ENCODE measurements at regions of chr12 and their contacts with region 1.

Region 1: DNA sequence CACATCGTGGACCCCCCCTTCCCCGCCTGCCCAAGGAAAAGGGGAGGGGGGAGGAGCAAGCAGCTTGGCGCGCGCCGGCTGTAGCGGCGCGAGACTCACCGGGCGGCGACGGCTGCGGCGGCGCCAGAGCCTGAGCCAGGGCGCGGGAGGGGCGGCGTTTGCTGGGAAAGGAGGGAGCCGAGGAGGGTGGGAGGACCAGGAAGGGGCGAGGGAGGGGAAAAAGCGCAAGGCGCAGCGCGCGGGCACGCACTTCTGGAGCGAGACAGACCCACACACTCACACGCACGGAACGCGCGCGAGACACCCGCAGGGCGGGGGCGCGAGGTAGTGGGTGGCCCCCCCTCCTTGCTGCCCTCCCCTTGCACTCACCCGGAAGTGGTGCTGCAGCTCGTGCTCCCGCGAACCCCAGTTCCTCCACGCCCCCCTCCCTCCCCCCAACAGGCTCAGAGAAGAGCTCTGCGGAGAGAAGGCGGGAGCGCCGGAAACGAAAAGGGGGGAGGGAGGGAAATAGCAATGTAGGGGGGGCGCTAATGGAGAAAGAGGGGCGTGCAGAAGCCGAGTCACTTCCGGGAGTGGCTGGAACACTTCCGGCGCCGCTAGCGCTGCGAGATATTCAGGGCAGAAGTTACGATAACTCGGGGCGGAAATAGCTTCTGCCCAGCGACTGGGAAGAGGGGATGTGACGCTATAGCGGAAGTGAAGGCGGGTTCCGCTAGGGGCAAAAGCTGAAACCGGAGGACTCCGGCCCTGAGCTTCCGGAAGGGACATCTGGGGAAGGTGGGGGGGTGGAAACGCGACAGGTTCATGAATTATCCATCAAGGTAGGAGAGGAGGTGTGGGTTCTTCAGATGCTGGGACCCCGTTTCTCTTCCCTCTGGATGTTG is at the start of gene ZNF384:
- DNase-seq: peak; percentile 99
- H3K4me3 ChIP-seq: peak within 1 kb of the TSS; percentile 68 to 100
- H3K27ac ChIP-seq: peak within 1 kb of the TSS; percentile 88
- H3K4me1 ChIP-seq: peaks cover 38% of the 10 kb centered on the region
- H3K27me3 ChIP-seq: no peaks in the 10 kb centered on the region
- CTCF ChIP-seq: peak in 1 of 3 experiments; percentile 38
- POLR2A ChIP-seq: peak in 1 of 2 donors; percentile 28
- total RNA-seq, gene ZNF384: 31.9 TPM

Region 2: GRCh38 chr12:4819654-4820053 is 1869.6 kb before region 1 on chr12:
- intact Hi-C with region 1: no loop called
- DNase-seq: no peak
- H3K4me3 ChIP-seq: no peak overlapping the region
- H3K27ac ChIP-seq: no peak overlapping the region
- H3K4me1 ChIP-seq: no peaks in the 10 kb centered on the region
- H3K27me3 ChIP-seq: no peaks in the 10 kb centered on the region
- CTCF ChIP-seq: no peak
- POLR2A ChIP-seq: no peak

Region 3: DNA sequence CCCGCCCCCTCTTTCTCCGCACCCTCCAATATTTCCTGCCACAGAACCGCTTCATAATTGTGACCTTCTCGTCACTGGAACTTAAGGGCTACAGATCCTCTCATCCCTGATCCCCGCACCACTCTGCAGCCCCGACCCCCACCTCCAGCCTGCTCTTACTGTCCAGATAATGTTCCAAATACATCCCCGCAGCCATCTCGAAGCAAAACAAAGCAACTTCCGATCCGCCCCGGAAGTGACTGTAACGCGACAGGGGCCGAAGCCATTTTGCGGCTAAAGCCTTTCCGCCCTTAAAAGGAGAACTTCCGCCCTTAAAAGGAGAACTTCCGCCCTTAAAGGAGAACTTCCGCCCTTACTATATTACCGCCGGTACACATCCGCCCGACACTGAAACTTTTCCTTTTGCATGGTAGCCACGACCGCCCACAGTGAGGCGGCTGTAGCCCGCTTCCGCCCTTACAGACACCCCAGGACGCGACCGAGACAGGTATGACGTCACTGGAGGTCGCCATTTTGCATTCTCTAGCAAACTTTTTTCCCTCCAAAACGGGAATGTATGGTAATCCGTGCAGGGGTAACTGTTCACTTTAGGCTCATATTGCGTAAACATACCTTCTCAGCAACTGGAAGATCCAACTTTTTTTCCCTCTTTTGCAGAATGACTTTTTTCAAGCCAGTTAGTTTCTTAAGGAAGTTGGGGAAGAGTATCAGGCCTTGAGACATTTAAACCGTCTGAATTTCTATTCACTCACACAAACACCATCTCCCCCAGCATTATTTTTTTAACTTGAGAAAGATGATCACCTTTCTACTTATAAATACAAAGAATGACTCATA is 26.1 kb before region 1 on chr12 and contains the start of gene ING4:
- intact Hi-C with region 1: loop called (anchors 1 kb)
- DNase-seq: peak in 1 of 2 donors; percentile 99
- H3K4me3 ChIP-seq: peak within 1 kb of the TSS; percentile 69 to 70
- H3K27ac ChIP-seq: peak within 1 kb of the TSS; percentile 68
- H3K4me1 ChIP-seq: peaks cover 15% of the 10 kb centered on the region
- H3K27me3 ChIP-seq: no peaks in the 10 kb centered on the region
- CTCF ChIP-seq: no peak
- POLR2A ChIP-seq: no peak
- total RNA-seq, gene ING4: 45.7 TPM

Region 4: DNA sequence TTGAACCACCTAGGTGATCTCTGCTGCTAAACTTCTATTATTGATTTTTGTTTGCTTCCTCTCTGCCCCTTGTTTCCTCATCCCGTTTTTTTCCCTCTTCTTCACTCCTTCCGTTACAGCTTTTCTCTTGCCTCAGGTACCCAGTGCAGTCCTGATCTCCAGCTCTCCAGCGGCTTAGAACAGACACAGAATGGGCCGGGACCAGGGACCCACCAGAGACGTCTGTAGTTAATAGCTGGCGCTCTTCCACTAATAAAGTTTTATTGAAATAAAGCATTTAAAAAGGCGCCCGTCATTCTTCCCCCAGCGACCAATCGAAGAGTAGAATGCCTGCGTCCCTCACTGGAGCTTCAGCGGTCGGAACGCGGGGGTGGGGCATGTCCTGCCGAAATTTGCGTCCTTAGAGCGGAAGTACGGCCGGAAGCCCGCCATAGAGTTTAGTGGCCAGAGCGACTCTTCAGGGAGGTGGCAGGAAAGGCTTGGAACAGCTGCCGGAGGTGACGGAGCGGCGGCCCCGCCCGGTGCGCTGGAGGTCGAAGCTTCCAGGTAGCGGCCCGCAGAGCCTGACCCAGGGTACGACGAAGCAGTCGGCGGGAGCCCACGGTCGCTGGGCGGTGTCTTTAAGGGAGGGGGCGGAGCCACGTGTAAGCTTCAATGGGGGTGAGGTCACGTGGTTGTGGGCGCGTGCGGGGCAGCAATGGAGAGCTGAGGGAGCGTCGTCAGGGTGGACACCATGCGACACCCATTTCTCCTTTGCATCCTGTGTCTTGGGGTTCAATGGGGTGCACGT is 34.6 kb after region 1 on chr12 and contains the start of gene COPS7A:
- intact Hi-C with region 1: loop called (anchors 2 kb)
- DNase-seq: peak in 1 of 2 donors; percentile 98
- H3K4me3 ChIP-seq: peak within 1 kb of the TSS; percentile 61 to 65
- H3K27ac ChIP-seq: peak within 1 kb of the TSS; percentile 77
- H3K4me1 ChIP-seq: peaks cover 10% of the 10 kb centered on the region
- H3K27me3 ChIP-seq: no peaks in the 10 kb centered on the region
- CTCF ChIP-seq: no peak
- POLR2A ChIP-seq: no peak
- total RNA-seq, gene COPS7A: 35.4 TPM

Measured in vagina (tissue), 2 donors.